Breast epithelium (tissue), 4 donors: ENCODE measurements at regions of chr6 and their contacts with region 1.

Region 1: GRCh38 chr6:93604951-93605350 is 185.6 kb upstream of the EPHA7 start:
- DNase-seq: no peak
- H3K4me3 ChIP-seq: no peak overlapping the region
- H3K27ac ChIP-seq: no peak overlapping the region
- H3K4me1 ChIP-seq: no peaks in the 10 kb centered on the region
- H3K27me3 ChIP-seq: no peaks in the 10 kb centered on the region
- CTCF ChIP-seq: no peak
- POLR2A ChIP-seq: no peak

Region 2: GRCh38 chr6:92888316-92888715 is 716.6 kb before region 1 on chr6:
- intact Hi-C with region 1: no loop called
- DNase-seq: no peak
- H3K4me3 ChIP-seq: no peak overlapping the region
- H3K27ac ChIP-seq: no peak overlapping the region
- H3K4me1 ChIP-seq: no peaks in the 10 kb centered on the region
- H3K27me3 ChIP-seq: no peaks in the 10 kb centered on the region
- CTCF ChIP-seq: no peak
- POLR2A ChIP-seq: no peak

Region 3: DNA sequence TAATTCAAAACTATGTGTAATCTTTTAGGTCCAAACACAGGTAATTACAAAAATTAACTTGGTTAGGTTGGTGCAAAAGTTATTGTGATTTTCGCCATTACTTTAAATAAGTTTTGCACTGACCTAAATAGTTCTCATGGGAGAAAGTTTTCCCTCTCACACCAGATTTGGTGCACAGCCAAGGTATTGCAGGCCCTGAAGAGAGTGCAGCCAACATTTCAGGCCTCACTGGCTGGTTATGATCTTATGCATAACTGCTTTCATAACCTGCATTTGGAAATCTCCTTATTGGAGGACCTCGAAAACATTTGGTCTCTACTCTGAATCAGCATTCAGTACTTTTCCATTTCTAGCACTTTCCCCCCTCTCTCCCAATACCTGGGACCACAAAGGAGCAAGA is 979.3 kb after region 1 on chr6:
- intact Hi-C with region 1: loop called (anchors 10 kb)
- DNase-seq: no peak
- H3K4me3 ChIP-seq: no peak overlapping the region
- H3K27ac ChIP-seq: no peak overlapping the region
- H3K4me1 ChIP-seq: no peaks in the 10 kb centered on the region
- H3K27me3 ChIP-seq: no peaks in the 10 kb centered on the region
- CTCF ChIP-seq: no peak
- POLR2A ChIP-seq: no peak